CD4-positive, alpha-beta T cell (primary cell): ENCODE measurements at regions of chr6 and their contacts with region 1.

Region 1: DNA sequence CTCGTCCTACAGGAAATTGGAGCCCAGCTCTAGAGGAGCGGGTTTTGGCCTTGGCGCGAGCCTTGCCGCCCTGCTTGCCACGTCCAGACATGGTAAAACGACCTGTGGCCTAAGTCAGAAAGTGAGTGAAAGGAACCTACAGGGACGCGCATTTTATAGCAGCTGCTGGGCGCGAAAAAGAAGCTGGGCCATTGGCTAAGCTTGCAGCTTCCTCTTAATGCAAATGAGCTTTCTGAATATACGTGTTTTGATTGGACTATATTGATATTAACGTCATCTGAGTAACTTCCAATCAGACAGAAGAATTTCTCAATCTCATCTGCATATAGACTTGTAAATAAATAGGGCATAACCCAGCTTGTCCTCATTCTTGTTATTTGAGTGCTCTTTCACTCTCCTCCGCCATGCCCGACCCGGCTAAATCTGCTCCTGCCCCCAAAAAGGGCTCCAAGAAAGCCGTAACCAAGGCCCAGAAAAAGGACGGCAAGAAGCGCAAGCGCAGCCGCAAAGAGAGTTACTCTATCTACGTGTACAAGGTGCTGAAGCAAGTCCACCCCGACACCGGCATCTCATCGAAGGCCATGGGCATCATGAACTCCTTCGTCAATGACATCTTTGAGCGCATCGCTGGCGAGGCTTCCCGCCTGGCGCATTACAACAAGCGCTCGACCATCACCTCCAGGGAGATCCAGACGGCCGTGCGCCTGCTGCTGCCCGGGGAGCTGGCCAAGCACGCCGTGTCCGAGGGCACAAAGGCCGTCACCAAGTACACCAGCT is 18.9 kb downstream of the OR2B2 start:
- DNase-seq: peak; percentile 76 to 98 (median 85)
- ATAC-seq: peak; percentile 73
- H3K4me3 ChIP-seq: peak overlapping the region; percentile 74
- H3K4me3 Mint-ChIP-seq: no peak overlapping the region
- H3K27ac ChIP-seq: peak overlapping the region; percentile 84 to 86
- H3K27ac Mint-ChIP-seq: no peak overlapping the region
- H3K4me1 ChIP-seq: peaks cover 49% of the 10 kb centered on the region
- H3K4me1 Mint-ChIP-seq: peaks cover 29% of the 10 kb centered on the region
- H3K27me3 ChIP-seq: no peaks in the 10 kb centered on the region
- H3K27me3 Mint-ChIP-seq: no peaks in the 10 kb centered on the region
- CTCF ChIP-seq: no peak

Region 2: DNA sequence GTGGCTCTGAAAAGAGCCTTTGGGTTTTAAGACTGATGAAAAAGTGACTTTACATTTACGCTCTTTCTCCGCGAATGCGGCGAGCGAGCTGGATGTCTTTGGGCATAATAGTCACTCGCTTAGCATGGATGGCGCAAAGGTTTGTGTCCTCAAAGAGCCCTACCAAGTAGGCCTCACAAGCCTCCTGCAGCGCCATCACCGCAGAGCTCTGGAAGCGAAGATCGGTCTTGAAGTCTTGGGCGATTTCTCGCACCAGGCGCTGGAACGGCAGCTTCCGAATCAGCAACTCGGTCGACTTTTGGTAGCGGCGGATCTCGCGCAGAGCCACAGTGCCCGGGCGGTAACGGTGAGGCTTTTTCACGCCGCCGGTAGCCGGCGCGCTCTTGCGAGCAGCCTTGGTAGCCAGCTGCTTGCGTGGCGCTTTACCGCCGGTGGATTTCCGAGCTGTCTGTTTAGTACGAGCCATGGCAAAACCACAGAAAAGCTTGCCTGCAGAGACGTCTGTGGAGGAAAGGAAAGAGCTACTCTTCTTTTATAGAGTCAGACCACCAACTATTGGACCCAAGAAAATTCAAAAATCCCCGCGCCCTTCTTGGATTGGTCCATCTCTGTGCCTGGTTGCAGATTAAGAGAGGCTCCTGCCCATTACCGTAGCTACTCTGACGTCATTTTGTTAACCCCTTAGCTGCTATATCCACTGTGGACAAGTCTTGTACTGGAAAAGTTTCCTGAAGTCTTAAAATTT is 1861.5 kb before region 1 on chr6:
- CTCF ChIA-PET with region 1: interaction called, 3 read pairs
- POLR2A ChIA-PET with region 1: interaction called, 34 read pairs
- intact Hi-C with region 1: loop called in 1 of 2 experiments (anchors 10 kb)
- DNase-seq: peak; percentile 73 to 94 (median 81)
- ATAC-seq: peak; percentile 65
- H3K4me3 ChIP-seq: peak overlapping the region; percentile 64
- H3K4me3 Mint-ChIP-seq: peak overlapping the region; percentile 97
- H3K27ac ChIP-seq: peak overlapping the region; percentile 42 to 72
- H3K27ac Mint-ChIP-seq: peak overlapping the region; percentile 99
- H3K4me1 ChIP-seq: peaks cover 35% of the 10 kb centered on the region
- H3K4me1 Mint-ChIP-seq: peaks cover 46% of the 10 kb centered on the region
- H3K27me3 ChIP-seq: no peaks in the 10 kb centered on the region
- H3K27me3 Mint-ChIP-seq: no peaks in the 10 kb centered on the region
- CTCF ChIP-seq: peak; percentile 22

Region 3: GRCh38 chr6:26196846-26197648 is 1696.2 kb before region 1 on chr6:
- CTCF ChIA-PET with region 1: no interaction called
- POLR2A ChIA-PET with region 1: interaction called, 84 read pairs
- intact Hi-C with region 1: no loop called
- DNase-seq: peak; percentile 60 to 97 (median 70)
- ATAC-seq: peak; percentile 55
- H3K4me3 ChIP-seq: peak overlapping the region; percentile 75
- H3K4me3 Mint-ChIP-seq: peak overlapping the region; percentile 94
- H3K27ac ChIP-seq: peak overlapping the region; percentile 81 to 87
- H3K27ac Mint-ChIP-seq: peak overlapping the region; percentile 97
- H3K4me1 ChIP-seq: peaks cover 26% of the 10 kb centered on the region
- H3K4me1 Mint-ChIP-seq: peaks cover 57% of the 10 kb centered on the region
- H3K27me3 ChIP-seq: no peaks in the 10 kb centered on the region
- H3K27me3 Mint-ChIP-seq: no peaks in the 10 kb centered on the region
- CTCF ChIP-seq: no peak

Region 4: DNA sequence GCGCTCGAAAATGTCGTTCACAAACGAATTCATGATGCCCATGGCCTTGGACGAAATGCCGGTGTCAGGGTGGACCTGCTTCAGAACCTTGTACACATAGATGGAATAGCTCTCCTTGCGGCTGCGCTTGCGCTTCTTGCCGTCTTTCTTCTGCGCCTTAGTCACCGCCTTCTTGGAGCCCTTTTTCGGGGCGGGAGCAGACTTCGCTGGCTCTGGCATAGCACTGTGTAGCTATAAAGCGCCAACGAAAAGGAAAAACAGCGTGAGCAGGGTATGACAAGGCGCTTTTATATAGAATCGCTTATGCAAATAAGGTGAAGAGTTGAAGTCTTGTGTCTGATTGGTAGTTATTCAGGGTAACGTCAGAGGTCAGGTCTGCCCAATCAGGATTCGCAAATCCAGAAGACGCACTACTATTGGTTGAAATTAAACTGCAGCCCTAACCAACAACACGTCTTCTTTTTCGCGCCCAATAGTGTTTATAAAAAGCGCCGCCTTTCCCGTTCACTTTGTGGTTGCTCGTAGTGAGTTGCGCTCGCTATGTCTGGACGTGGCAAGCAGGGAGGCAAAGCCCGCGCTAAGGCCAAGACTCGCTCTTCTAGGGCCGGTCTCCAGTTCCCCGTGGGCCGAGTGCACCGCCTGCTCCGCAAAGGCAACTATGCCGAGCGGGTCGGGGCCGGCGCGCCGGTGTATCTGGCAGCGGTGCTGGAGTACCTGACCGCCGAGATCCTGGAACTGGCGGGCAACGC is 760.5 kb before region 1 on chr6:
- CTCF ChIA-PET with region 1: interaction called, 6 read pairs
- POLR2A ChIA-PET with region 1: interaction called, 105 read pairs
- intact Hi-C with region 1: loop called (anchors 2 to 5 kb)
- DNase-seq: peak; percentile 80 to 99 (median 88)
- ATAC-seq: peak; percentile 79
- H3K4me3 ChIP-seq: peak overlapping the region; percentile 75
- H3K4me3 Mint-ChIP-seq: no peak overlapping the region
- H3K27ac ChIP-seq: peak overlapping the region; percentile 79 to 81
- H3K27ac Mint-ChIP-seq: no peak overlapping the region
- H3K4me1 ChIP-seq: peaks cover 31% of the 10 kb centered on the region
- H3K4me1 Mint-ChIP-seq: peaks cover 12% of the 10 kb centered on the region
- H3K27me3 ChIP-seq: no peaks in the 10 kb centered on the region
- H3K27me3 Mint-ChIP-seq: no peaks in the 10 kb centered on the region
- CTCF ChIP-seq: no peak

Region 5: DNA sequence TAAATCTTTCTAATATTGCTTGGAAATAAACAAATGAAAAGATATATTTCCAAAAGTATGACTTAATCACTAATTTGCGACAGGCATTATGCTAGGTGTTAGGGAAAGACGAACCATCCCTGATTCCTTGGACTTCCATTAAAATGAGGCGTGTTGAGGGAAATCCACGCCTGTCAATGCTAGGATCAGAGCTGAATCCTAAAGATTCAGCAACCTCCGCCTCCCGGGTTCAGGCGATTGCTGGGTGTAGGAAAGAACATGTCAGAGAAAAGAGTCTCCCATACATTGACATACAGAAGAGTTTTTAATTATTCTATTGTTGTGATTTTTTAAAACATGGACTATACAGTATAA is 662.5 kb before region 1 on chr6:
- CTCF ChIA-PET with region 1: no interaction called
- POLR2A ChIA-PET with region 1: no interaction called
- intact Hi-C with region 1: no loop called
- DNase-seq: no peak
- ATAC-seq: no peak
- H3K4me3 ChIP-seq: no peak overlapping the region
- H3K4me3 Mint-ChIP-seq: no peak overlapping the region
- H3K27ac ChIP-seq: no peak overlapping the region
- H3K27ac Mint-ChIP-seq: no peak overlapping the region
- H3K4me1 ChIP-seq: no peaks in the 10 kb centered on the region
- H3K4me1 Mint-ChIP-seq: peaks cover 6% of the 10 kb centered on the region
- H3K27me3 ChIP-seq: peaks cover 50 to 76% of the 10 kb centered on the region in 2 experiments
- H3K27me3 Mint-ChIP-seq: peaks cover 84% of the 10 kb centered on the region
- CTCF ChIP-seq: no peak

Region 6: DNA sequence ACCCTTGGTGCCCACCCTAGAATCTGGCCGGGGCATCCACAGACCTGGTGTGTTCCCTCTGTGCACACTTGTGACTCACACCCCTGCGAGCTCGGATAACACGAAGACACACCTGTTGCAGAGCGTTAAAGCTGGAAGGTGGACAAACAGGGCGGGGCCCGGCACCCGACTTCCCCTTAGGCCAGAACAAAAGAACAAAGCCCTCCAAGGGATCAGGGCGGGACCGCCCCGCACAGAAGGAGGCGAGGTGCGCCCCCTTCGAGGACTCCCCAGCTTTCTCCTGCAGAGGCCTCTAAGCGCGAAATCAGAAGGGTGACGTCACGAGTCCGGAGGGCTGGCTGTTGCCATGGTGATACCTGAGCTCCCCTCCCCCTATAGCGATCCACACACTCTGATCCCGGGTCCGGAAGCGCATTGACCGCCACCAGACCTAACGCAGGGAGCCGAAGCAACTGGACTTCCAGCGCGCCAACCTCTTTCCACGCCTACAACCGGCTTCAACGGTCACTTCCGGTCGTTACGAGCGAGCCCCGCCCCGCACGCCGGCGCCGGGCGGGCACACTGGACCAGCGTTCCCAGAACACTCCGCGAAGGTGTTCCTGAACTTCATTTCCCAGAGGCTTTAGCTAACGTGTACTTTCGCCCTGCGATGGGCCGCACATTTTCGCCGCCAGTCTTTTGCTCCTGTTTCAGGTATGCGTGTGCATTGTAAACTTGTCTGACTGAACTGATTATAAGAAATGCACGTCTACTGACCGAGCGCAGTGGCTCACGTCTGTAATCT is 420.4 kb before region 1 on chr6 and contains the start of gene ZNF184:
- CTCF ChIA-PET with region 1: no interaction called
- POLR2A ChIA-PET with region 1: interaction called, 20 read pairs
- intact Hi-C with region 1: loop called in 1 of 2 experiments (anchors 2 kb)
- DNase-seq: peak; percentile 68 to 94 (median 80)
- ATAC-seq: peak; percentile 59
- H3K4me3 ChIP-seq: peak within 1 kb of the TSS; percentile 85
- H3K4me3 Mint-ChIP-seq: peak within 1 kb of the TSS; percentile 88
- H3K27ac ChIP-seq: peak within 1 kb of the TSS; percentile 88 to 96
- H3K27ac Mint-ChIP-seq: peak within 1 kb of the TSS; percentile 91
- H3K4me1 ChIP-seq: peaks cover 21% of the 10 kb centered on the region
- H3K4me1 Mint-ChIP-seq: peaks cover 53% of the 10 kb centered on the region
- H3K27me3 ChIP-seq: no peaks in the 10 kb centered on the region
- H3K27me3 Mint-ChIP-seq: no peaks in the 10 kb centered on the region
- CTCF ChIP-seq: no peak
- total RNA-seq, gene ZNF184: 19.6 to 21.1 TPM

Region 7: GRCh38 chr6:27795697-27796494 is 97.4 kb before region 1 on chr6:
- CTCF ChIA-PET with region 1: interaction called, 33 read pairs
- POLR2A ChIA-PET with region 1: interaction called, 41 read pairs
- intact Hi-C with region 1: no loop called
- DNase-seq: peak in 9 of 14 experiments; percentile 11 to 88 (median 36)
- ATAC-seq: peak; percentile 72
- H3K4me3 ChIP-seq: no peak overlapping the region
- H3K4me3 Mint-ChIP-seq: peak overlapping the region; percentile 47
- H3K27ac ChIP-seq: no peak overlapping the region
- H3K27ac Mint-ChIP-seq: peak overlapping the region; percentile 80
- H3K4me1 ChIP-seq: peaks cover 20% of the 10 kb centered on the region
- H3K4me1 Mint-ChIP-seq: peaks cover 31% of the 10 kb centered on the region
- H3K27me3 ChIP-seq: peaks cover 5 to 9% of the 10 kb centered on the region in 2 experiments
- H3K27me3 Mint-ChIP-seq: peaks cover 18% of the 10 kb centered on the region
- CTCF ChIP-seq: peak; percentile 80

Region 8: DNA sequence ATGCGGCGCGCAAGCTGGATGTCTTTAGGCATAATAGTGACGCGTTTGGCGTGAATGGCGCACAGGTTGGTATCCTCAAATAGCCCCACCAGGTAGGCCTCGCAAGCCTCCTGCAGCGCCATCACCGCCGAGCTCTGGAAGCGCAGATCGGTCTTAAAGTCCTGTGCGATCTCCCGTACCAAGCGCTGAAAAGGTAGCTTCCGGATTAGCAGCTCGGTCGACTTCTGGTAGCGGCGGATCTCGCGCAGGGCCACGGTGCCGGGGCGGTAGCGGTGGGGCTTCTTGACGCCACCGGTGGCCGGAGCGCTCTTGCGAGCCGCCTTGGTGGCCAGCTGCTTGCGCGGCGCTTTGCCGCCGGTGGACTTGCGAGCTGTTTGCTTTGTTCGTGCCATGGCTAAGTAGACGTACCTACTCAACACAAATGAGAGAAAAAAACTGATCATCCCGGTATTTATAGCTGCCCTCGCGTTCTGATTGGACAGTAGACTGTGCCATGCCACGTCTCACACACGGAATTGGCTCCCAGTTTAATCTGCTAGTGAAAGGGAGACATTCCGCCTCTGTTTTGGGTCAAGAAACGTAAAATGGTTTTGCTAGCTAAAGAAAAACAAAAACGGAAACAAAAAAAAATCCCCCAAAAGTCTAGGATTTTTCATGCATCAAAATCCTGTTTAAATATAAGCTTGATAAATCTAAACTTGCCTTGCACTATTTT is 21.2 kb before region 1 on chr6:
- CTCF ChIA-PET with region 1: interaction called, 50 read pairs
- POLR2A ChIA-PET with region 1: interaction called, 1,297 read pairs
- intact Hi-C with region 1: loop called (anchors 1 kb)
- DNase-seq: peak; percentile 71 to 97 (median 82)
- ATAC-seq: peak; percentile 75
- H3K4me3 ChIP-seq: peak overlapping the region; percentile 86
- H3K4me3 Mint-ChIP-seq: peak overlapping the region; percentile 93
- H3K27ac ChIP-seq: peak overlapping the region; percentile 89
- H3K27ac Mint-ChIP-seq: peak overlapping the region; percentile 93
- H3K4me1 ChIP-seq: peaks cover 39% of the 10 kb centered on the region
- H3K4me1 Mint-ChIP-seq: peaks cover 41% of the 10 kb centered on the region
- H3K27me3 ChIP-seq: no peaks in the 10 kb centered on the region
- H3K27me3 Mint-ChIP-seq: no peaks in the 10 kb centered on the region
- CTCF ChIP-seq: peak; percentile 43

Region 9: GRCh38 chr6:27940766-27941165 is 47.5 kb after region 1 on chr6:
- CTCF ChIA-PET with region 1: no interaction called
- POLR2A ChIA-PET with region 1: no interaction called
- intact Hi-C with region 1: no loop called
- DNase-seq: no peak
- ATAC-seq: no peak
- H3K4me3 ChIP-seq: no peak overlapping the region
- H3K4me3 Mint-ChIP-seq: no peak overlapping the region
- H3K27ac ChIP-seq: no peak overlapping the region
- H3K27ac Mint-ChIP-seq: no peak overlapping the region
- H3K4me1 ChIP-seq: no peaks in the 10 kb centered on the region
- H3K4me1 Mint-ChIP-seq: no peaks in the 10 kb centered on the region
- H3K27me3 ChIP-seq: peaks cover 9 to 36% of the 10 kb centered on the region in 2 experiments
- H3K27me3 Mint-ChIP-seq: peaks cover 66% of the 10 kb centered on the region
- CTCF ChIP-seq: no peak